Dorsolateral prefrontal cortex (tissue), 120 donors: ENCODE measurements at regions of chr4 and their contacts with region 1.

Region 1: GRCh38 chr4:38069271-38069760 is 109.1 kb downstream of the PTTG2 start:
- DNase-seq: no peak
- H3K4me3 ChIP-seq: no peak overlapping the region
- H3K27ac ChIP-seq: peak overlapping the region in 1 of 59 donors; percentile 21
- H3K27me3 ChIP-seq: no peaks in the 10 kb centered on the region
- CTCF ChIP-seq: peak in 18 of 56 donors; percentile 9 to 62 (median 32)

Region 2: DNA sequence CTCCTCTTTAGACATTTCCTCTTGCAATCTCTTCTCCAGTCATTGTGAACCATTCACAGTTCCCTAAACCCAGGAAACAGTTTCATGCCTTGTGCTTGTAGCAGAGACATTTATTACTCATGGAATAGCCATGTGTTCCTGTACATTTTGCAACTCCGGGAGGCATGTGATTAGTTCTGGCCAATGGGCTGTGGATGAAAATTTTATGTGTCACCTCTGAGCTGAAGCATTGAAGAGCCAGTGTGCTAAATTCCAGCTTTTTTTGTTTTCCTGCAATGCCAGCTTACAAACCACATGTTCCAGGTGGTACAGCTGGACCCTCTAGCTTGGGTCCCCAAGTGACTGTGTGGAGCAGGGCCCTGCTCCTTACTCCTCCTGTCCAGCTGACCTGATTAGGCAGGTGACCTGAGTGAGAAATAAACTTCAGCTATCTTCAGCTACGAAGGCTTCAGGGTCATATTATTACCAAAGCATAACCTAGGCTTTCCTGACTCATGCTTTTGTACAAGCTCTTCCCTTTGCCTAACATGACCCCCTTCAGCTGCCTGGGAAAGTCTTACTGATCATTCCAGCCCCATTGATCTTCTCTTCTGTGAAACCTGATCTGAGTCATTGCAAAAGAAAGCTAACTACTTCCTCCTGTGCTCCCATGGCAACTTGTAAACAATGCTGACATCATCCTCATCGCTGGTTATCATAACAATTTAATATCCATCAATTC is 91.3 kb after region 1 on chr4:
- intact Hi-C with region 1: loop called in 1 of 2 experiments (anchors 5 kb)
- DNase-seq: no peak
- H3K4me3 ChIP-seq: no peak overlapping the region
- H3K27ac ChIP-seq: peak overlapping the region in 2 of 59 donors; percentile 15 to 26
- H3K27me3 ChIP-seq: no peaks in the 10 kb centered on the region
- CTCF ChIP-seq: no peak

Region 3: DNA sequence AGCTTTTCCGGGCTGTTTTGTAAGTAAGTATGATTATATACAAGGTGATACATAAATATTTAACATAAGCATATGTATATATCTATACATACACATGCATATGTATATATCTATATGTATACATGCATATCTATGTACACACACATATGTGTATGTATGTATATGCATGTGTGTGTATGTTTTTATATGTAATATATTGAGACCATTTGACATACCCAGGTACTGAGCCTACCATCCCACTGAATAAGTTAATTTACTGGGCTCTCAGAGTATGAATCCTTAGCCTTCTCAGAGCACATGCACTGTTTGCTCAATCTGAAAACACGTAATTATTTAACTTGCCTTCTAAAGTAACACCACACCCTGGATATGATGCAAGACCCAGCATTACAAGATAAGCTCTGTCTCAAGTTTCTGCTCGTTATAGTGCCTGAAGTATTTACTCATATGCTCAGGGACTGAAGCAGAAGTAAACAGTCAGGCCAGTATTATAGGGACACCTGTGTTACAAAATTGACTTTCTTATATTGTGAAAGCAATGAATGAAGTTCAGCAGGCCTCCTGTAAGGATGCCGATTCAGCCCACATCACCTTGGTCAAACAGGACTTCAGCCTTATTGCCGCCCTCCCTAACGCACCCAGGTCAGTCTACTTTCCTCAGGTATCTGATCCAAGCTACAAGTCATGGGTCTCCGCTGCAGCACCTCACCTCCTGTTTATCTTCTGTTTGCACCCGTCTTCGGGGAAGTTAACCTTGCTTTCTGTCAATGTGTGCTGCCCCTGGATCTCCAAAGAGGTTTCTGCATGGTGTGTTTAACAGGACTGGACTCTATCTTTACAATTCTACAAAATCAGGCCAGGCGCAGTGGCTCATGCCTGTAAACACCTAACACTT is 551.7 kb after region 1 on chr4:
- intact Hi-C with region 1: no loop called
- DNase-seq: no peak
- H3K4me3 ChIP-seq: no peak overlapping the region
- H3K27ac ChIP-seq: no peak overlapping the region
- H3K27me3 ChIP-seq: no peaks in the 10 kb centered on the region
- CTCF ChIP-seq: no peak

Region 4: DNA sequence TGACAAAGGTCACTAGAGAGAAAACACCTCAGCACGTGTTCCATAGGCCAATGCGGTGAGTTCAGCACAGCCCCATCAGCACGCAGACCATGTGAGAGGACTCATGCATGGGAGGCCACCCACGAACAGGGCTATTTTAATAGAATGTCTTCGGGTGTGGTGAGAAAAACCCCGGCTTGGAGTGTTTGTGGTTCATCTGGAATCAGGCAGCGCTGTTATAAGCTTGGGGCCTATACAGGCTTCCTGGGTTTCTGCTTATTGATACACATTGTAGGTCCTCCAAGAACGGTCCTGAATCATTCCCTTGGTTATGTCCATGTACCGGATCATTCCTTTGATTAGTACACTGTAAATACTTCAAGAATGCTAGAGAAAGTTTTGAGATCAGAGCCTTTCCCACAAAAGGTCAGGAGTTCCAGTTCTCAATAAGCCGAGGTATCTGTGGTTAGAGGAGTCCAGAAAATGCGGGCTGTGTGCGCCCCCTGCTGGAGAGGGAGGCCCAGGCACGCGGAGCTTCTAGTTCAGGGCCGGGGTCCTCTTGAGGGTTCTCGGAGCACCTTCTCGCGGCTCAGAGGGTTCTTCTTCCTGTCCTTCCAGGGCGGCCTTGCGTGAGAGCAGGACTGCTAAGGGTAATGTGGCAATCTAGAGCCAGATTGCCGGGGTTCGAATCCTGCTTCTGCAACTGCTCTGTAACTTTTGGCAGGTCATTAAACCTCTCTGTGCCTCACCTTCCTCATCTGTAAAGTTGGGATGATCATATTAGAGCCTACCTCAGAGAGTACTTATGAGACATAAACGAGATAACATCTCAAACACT is 661.7 kb after region 1 on chr4:
- intact Hi-C with region 1: loop called (anchors 5 to 10 kb)
- DNase-seq: peak; percentile 30 to 91 (median 78)
- H3K4me3 ChIP-seq: no peak overlapping the region
- H3K27ac ChIP-seq: no peak overlapping the region
- H3K27me3 ChIP-seq: no peaks in the 10 kb centered on the region
- CTCF ChIP-seq: peak; percentile 78 to 99 (median 94)